Activated CD4-positive, alpha-beta memory T cell treated with anti-CD3 and anti-CD28 coated beads, Interleukin-2, amount 10 ng/mL, durations not matched to agents 7 days and 5 days (primary cell): ENCODE measurements at regions of chr12 and their contacts with region 1.

Region 1: GRCh38 chr12:107884769-107885694 is 110.5 kb downstream of the ASCL4 start:
- DNase-seq: peak; percentile 53
- H3K4me3 Mint-ChIP-seq: no peak overlapping the region
- H3K27ac Mint-ChIP-seq: no peak overlapping the region
- H3K4me1 Mint-ChIP-seq: peaks cover 2% of the 10 kb centered on the region
- H3K27me3 Mint-ChIP-seq: peaks cover 27% of the 10 kb centered on the region

Region 2: DNA sequence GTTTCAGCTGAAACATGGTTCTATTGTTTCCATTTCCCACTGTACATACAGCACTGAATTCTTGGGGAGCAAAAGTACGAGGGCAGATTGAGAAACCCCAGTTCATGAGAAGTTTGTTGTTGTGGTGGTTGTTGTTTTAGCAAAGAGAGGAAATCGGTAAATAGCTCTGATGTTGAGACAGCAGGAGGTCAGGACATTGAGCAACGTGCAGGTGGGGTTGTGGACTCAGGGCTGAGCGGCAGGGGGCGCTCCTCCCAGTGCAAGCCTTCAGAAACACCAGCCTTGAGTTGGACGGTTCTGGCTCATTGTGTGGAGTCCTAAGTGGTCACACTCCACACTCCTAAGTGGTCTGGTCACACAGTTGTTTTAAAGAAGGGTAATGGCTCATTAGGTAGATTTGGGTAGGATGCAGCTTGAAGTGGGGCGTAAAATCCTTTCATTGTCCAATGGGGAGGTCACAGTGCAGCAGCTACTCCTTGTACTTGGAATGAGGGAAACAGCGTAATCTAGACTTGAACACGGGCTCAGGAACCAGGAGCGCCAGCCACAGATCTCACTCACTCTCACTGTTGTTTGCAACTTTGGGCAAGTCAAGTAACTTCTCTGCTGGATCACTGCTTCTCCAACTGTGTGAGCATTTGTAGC is 213.9 kb before region 1 on chr12:
- CTCF ChIA-PET with region 1: interaction called, 18 read pairs
- POLR2A ChIA-PET with region 1: no interaction called
- DNase-seq: peak; percentile 61
- H3K4me3 Mint-ChIP-seq: no peak overlapping the region
- H3K27ac Mint-ChIP-seq: no peak overlapping the region
- H3K4me1 Mint-ChIP-seq: peaks cover 9% of the 10 kb centered on the region
- H3K27me3 Mint-ChIP-seq: peaks cover 25% of the 10 kb centered on the region

Region 3: GRCh38 chr12:107679336-107679735 is 205.7 kb before region 1 on chr12:
- CTCF ChIA-PET with region 1: interaction called, 28 read pairs
- POLR2A ChIA-PET with region 1: no interaction called
- DNase-seq: no peak
- H3K4me3 Mint-ChIP-seq: no peak overlapping the region
- H3K27ac Mint-ChIP-seq: no peak overlapping the region
- H3K4me1 Mint-ChIP-seq: peaks cover 1% of the 10 kb centered on the region
- H3K27me3 Mint-ChIP-seq: peaks cover 20% of the 10 kb centered on the region